ENCODE measurements at regions of chr12 and their contacts with region 1.

Region 1: GRCh38 chr12:119988782-119989668 is at the start of gene BICDL1:
- DNase-seq: peak; percentile 96
- ATAC-seq: peak; percentile 79
- H3K4me3 ChIP-seq: peak within 1 kb of the TSS; percentile 71
- H3K27ac ChIP-seq: no peak within 1 kb of the TSS
- H3K4me1 ChIP-seq: peaks cover 17% of the 10 kb centered on the region
- H3K27me3 ChIP-seq: peaks cover 19% of the 10 kb centered on the region
- CTCF ChIP-seq: no peak
- total RNA-seq, gene BICDL1: 3.6 and 5.8 TPM in 2 replicates

Region 2: DNA sequence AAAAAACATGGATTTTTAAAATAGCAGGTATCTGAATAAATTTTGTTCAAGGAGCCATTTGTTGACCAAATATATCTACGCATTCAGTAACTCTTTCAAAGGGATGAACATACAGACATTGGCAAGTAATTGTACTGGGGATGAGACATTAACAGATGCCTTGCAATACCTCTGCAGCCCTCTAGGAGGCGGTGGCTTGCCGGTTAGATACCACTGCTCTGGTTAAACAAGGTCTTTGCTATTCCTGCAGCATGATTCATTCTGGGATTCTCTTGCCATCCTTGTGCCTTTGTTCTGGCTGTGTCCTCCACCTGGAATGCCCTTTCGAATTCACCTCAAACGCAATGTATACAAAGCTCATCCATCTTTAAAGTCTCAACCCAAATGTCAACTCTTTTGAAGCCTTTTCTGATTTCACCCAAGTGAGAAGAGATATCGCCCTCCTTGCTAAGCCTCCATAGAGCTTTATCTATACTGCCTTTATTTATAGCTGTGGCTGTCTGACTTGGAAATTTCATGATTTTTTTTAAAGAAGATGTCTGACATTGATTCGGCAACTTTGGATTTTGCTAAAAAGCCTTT is 1138.7 kb before region 1 on chr12:
- CTCF ChIA-PET with region 1: no interaction called
- POLR2A ChIA-PET with region 1: no interaction called
- intact Hi-C with region 1: no loop called
- DNase-seq: peak; percentile 46
- ATAC-seq: no peak
- H3K4me3 ChIP-seq: no peak overlapping the region
- H3K27ac ChIP-seq: no peak overlapping the region
- H3K4me1 ChIP-seq: no peaks in the 10 kb centered on the region
- H3K27me3 ChIP-seq: no peaks in the 10 kb centered on the region
- CTCF ChIP-seq: peak; percentile 83

Region 3: DNA sequence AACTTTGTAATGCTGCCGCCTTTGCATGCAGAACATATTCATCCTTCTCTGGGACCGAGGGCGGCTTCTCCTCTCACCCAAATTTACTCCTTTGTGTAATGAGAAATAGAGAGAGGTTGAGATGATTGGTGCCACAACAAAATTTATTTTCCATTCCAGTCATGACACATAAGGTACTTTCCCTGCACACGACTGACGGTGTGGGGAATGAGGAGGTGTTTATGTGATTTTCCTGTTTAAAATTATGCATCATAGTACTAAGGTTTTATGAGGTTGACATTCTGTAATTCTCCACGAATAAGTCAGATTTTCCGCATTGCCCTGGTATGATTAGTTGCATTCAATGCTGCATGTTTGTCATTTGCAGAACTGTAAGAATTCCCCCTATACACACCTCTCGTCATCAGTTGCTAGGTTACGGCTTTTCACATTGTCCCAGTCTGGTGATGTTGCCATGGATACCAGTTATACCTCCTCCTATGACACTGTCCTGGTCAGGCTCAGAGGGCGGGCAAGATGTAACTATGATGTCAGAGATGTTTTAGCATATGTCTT is 23.1 kb after region 1 on chr12:
- CTCF ChIA-PET with region 1: no interaction called
- POLR2A ChIA-PET with region 1: no interaction called
- intact Hi-C with region 1: loop called (anchors 2 kb)
- DNase-seq: peak; percentile 70
- ATAC-seq: peak; percentile 80
- H3K4me3 ChIP-seq: no peak overlapping the region
- H3K27ac ChIP-seq: no peak overlapping the region
- H3K4me1 ChIP-seq: peaks cover 15% of the 10 kb centered on the region
- H3K27me3 ChIP-seq: no peaks in the 10 kb centered on the region
- CTCF ChIP-seq: no peak

Region 4: GRCh38 chr12:120079411-120080026 is 90.5 kb after region 1 on chr12:
- CTCF ChIA-PET with region 1: interaction called, 4 read pairs
- POLR2A ChIA-PET with region 1: no interaction called
- intact Hi-C with region 1: loop called (anchors 5 kb)
- DNase-seq: peak; percentile 98
- ATAC-seq: peak; percentile 91
- H3K4me3 ChIP-seq: peak overlapping the region; percentile 27
- H3K27ac ChIP-seq: peak overlapping the region; percentile 95
- H3K4me1 ChIP-seq: peaks cover 28% of the 10 kb centered on the region
- H3K27me3 ChIP-seq: no peaks in the 10 kb centered on the region
- CTCF ChIP-seq: no peak

Measured in PC-3 (cell line).